IMR-90 (cell line): ENCODE measurements at regions of chr6 and their contacts with region 1.

Region 1: DNA sequence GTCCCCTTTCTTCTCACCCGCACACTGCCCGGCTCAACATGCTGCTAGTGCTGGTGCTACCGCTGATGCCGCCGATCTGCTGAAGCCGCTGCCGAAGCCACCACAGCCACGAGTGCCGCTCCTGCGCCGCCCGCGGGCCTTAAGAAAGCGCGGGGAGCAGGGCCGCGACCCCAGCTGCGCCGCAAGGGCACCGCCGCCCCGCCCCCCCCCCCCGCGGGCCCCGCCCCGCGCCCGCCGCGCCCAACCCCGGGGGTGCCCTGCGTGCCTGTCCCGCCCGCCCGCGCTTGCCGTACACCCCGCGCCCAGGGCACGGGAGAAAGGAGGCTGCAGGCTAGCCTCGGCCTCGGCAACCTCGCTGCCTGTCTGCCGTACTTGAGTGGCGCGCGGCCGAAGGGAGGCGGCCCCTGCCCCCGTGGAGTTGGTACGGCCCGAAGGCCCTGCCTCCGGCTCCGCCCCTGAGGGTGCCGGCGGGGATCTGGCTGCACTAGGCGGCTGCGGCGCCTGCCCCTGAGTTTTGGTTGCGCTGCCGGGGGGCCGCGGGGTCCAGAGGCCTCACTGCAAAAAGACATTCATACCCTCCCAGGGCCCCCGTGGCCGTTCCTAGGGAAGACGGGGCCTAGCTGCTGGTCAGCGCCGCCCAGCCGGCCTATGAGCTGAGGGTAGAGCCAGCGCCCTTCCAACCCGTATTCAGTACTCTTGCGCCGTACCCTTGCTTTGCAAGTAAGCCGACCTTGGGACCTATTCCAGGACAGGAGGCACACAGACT is at the start of gene SOD2:
- DNase-seq: peak; percentile 81
- ATAC-seq: peak; percentile 86
- H3K4me3 ChIP-seq: peak within 1 kb of the TSS; percentile 99
- H3K27ac ChIP-seq: peak within 1 kb of the TSS; percentile 99
- H3K4me1 ChIP-seq: peaks cover 12% of the 10 kb centered on the region
- H3K27me3 ChIP-seq: no peaks in the 10 kb centered on the region
- CTCF ChIP-seq: no peak
- POLR2A ChIP-seq: peak; percentile 84
- RAD21 ChIP-seq: no peak
- total RNA-seq, gene SOD2: 243 TPM in 2 replicates

Region 2: DNA sequence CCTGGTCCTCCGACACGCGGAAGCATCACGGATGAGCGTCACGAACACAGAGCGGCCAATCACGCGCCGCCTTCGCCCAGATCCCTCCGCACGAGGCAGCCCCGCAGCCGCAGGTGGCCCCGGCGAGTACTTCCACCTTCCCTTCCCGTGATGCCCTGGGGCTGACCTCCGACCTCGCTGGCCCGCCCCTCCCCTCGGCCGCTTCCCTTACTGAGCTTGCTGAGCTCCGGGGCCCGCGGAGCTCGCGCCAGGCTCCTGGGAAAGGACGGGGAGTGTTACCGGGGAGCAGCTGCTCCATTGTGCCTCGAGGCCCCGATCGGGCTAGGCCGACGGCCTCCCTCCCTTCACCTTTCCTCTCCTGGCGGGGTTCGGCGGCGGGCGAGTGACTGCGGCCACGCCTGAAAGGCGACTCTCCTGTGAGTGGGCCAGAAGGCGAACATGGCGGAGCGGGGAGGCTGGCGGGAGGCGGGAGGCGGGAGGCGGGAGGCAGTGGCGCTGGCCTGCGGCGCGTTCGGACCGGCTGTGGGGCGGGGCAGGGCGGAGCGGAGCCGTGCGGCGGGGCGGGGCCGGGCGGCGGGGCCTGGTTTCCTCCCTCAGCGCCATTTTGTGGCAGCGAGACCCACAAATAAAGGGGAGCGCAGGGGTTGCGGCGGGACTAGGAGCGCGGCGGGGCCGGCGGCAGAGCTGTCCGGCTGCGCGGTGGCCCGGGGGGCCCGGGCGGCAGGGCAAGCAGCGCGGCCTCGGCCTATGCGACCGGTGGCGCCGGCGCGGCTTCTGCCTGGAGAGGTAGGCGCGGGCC is 33.8 kb after region 1 on chr6 and contains the start of gene WTAP:
- CTCF ChIA-PET with region 1: no interaction called
- POLR2A ChIA-PET with region 1: no interaction called
- dilution Hi-C with region 1: no loop called
- in situ Hi-C with region 1: loop called (anchors 5 kb)
- intact Hi-C with region 1: loop called (anchors 1 kb)
- DNase-seq: peak; percentile 92
- ATAC-seq: peak; percentile 95
- H3K4me3 ChIP-seq: peak within 1 kb of the TSS; percentile 98
- H3K27ac ChIP-seq: peak within 1 kb of the TSS; percentile 99
- H3K4me1 ChIP-seq: peaks cover 3% of the 10 kb centered on the region; the same call in 1 of the 2 replicates
- H3K27me3 ChIP-seq: no peaks in the 10 kb centered on the region
- CTCF ChIP-seq: no peak
- POLR2A ChIP-seq: peak; percentile 94
- RAD21 ChIP-seq: no peak
- total RNA-seq, gene WTAP: 92.3 and 124 TPM in 2 replicates

Region 3: GRCh38 chr6:159761873-159762680 is 68.8 kb after region 1 on chr6 and contains the start of gene ACAT2:
- CTCF ChIA-PET with region 1: no interaction called
- POLR2A ChIA-PET with region 1: no interaction called
- dilution Hi-C with region 1: no loop called
- in situ Hi-C with region 1: loop called (anchors 10 kb)
- intact Hi-C with region 1: loop called (anchors 2 kb)
- DNase-seq: peak; percentile 92
- ATAC-seq: peak; percentile 96
- H3K4me3 ChIP-seq: peak within 1 kb of the TSS; percentile 79
- H3K27ac ChIP-seq: peak within 1 kb of the TSS; percentile 94
- H3K4me1 ChIP-seq: peaks cover 20% of the 10 kb centered on the region
- H3K27me3 ChIP-seq: no peaks in the 10 kb centered on the region
- CTCF ChIP-seq: no peak
- POLR2A ChIP-seq: peak; percentile 39; the same call in 1 of the 2 replicates
- RAD21 ChIP-seq: no peak
- total RNA-seq, gene ACAT2: 45.2 and 50.3 TPM in 2 replicates

Region 4: DNA sequence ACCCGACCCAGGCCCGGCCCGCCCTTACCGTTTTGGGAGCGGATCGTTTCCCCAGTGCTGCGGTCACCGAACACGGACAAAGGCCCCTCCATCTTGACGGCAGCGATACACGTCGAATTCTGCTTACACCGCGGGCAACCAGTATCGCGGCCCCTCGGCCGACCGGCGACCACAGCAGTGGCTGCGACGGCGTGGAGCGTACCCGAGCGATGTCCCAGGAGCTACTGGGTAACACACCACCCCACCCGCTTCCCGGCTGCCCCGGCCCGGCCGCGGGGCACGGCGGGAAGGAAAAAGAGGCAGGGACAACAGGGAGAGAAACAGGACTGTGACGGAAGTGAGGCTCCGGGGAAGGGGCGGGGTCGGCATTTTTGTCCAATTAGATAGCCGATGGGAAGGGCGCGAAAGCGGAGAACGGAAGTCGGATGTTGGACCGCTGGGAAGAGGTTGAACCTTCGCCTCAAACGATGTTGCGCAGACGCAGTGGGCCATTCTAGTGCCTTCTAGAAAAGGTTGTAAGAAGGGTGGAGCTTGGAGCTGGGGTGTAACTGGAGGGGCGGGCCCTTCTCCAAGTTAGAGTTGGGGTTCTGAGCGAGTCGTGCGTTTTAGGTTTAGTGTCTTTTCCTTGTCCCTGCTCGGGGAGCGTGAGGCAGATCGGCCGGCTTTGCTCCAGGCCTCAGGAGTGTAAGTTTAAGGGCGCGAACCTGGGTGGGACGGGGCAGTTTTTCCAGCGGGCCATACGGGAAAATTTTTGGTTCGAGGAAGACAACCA is 96.3 kb after region 1 on chr6 and contains the start of gene TCP1:
- CTCF ChIA-PET with region 1: interaction called, 5 read pairs
- POLR2A ChIA-PET with region 1: no interaction called
- dilution Hi-C with region 1: no loop called
- in situ Hi-C with region 1: no loop called
- intact Hi-C with region 1: loop called (anchors 1 kb)
- DNase-seq: peak; percentile 99
- ATAC-seq: peak; percentile 89
- H3K4me3 ChIP-seq: peak within 1 kb of the TSS; percentile 89
- H3K27ac ChIP-seq: peak within 1 kb of the TSS; percentile 91
- H3K4me1 ChIP-seq: peaks cover 4% of the 10 kb centered on the region
- H3K27me3 ChIP-seq: no peaks in the 10 kb centered on the region
- CTCF ChIP-seq: no peak
- POLR2A ChIP-seq: peak; percentile 95
- RAD21 ChIP-seq: no peak
- total RNA-seq, gene TCP1: 576 and 610 TPM in 2 replicates

Region 5: DNA sequence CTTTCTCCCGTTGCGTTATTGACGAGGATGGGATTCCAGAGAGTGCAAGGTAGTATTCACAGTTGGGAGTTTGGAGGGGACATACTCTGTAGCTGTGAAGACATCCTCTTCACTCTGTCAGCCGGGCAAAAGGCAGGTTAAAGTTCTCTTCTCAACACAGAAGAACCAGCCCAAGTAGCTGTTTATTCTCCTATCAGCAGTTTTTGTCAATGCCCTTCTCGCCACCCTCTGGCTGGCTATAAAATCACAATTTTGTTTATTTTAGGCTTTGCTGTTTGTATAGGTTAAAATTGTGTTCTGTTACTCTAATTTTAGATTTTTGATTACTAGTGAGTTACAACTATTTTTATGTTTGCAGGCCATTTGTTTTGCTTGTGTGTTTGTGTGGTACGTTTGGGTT is 159.6 kb after region 1 on chr6:
- CTCF ChIA-PET with region 1: no interaction called
- POLR2A ChIA-PET with region 1: no interaction called
- dilution Hi-C with region 1: no loop called
- in situ Hi-C with region 1: no loop called
- intact Hi-C with region 1: loop called (anchors 2 kb)
- DNase-seq: no peak
- ATAC-seq: 0 out of 2 replicates have a peak, but pooled peaks have one; percentile 24
- H3K4me3 ChIP-seq: no peak overlapping the region
- H3K27ac ChIP-seq: no peak overlapping the region
- H3K4me1 ChIP-seq: no peaks in the 10 kb centered on the region
- H3K27me3 ChIP-seq: peaks cover 5% of the 10 kb centered on the region
- CTCF ChIP-seq: peak; percentile 17; the same call in 1 of the 2 replicates
- POLR2A ChIP-seq: no peak
- RAD21 ChIP-seq: no peak

Region 6: DNA sequence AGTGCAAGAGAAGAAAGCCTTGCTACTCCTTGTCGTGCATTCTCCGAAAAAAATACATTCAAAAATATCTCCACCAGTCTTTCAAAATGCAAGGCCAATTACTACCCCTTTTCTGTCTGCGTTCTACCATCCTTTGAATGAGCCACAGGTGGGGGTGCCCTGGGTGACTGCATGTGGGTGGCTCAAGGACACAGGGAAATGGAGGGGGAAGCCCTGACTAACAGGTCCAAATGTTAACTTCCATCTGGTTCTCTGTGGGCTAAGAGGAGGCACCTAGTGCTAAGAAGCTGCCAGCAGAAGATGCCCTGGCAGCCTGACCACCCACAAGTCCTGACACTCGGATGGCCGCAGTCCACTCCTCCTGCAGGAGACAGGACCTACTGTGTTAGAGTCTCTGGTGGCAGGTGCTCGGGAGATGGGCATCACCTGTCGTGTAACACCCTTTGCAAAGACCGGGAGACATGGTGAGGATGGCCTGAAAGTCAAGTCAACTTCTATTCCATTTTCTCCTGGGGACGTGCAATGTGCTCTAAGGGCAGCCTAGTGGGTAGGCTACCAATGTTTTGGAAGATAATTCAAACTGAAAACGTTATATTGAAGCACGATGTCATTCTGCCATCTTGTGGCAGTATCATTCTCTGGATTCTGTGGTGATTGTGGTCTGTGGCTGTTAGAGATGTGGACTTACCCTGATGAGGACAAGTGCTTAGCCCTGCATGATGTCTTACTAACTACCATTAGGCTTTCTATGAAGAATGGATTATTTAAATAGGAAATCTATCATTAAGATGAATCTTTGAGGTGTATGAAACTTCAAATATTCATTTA is 248.2 kb after region 1 on chr6:
- CTCF ChIA-PET with region 1: interaction called, 3 read pairs
- POLR2A ChIA-PET with region 1: no interaction called
- dilution Hi-C with region 1: no loop called
- in situ Hi-C with region 1: no loop called
- intact Hi-C with region 1: loop called (anchors 1 kb)
- DNase-seq: peak; percentile 57
- ATAC-seq: peak; percentile 85
- H3K4me3 ChIP-seq: no peak overlapping the region
- H3K27ac ChIP-seq: no peak overlapping the region
- H3K4me1 ChIP-seq: peaks cover 2% of the 10 kb centered on the region; the same call in 1 of the 2 replicates
- H3K27me3 ChIP-seq: peaks cover 3% of the 10 kb centered on the region; the same call in 1 of the 2 replicates
- CTCF ChIP-seq: peak; percentile 68
- POLR2A ChIP-seq: no peak
- RAD21 ChIP-seq: peak; percentile 85

Region 7: DNA sequence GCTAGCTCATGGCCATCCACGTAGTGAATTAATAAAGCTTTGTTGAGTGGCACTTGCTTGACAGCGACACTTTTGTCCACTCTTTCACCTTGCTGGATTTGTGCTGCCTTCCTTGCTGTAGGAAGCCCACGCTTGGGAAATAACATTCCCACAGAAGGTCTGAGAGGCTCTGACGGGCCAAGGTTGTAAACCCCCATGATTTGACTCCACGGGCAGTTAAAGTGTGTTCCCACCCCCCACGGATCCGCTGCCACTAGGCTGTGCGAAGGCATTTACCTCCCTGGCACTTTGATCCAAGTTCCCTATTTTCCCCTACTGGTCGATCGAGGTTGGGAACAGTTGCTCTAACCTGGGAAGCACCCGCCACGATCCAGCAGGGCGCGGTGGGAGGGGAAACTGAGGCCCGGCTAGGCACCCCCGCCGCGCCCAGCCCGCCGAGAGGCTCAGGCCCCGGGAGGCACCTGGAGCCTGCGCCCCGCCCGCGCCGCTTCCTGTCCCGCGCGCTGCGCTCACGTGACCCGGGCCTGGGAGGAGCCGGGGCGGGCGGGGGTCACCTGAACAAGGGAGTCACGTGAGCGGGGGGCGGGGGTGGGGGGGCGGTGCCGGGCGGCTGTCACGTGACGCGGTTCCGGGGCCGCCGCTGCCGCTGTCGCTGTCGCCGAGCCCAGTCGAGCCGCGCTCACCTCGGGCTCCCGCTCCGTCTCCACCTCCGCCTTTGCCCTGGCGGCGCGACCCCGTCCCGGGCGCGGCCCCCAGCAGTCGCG is 275.3 kb after region 1 on chr6 and contains the start of gene IGF2R:
- CTCF ChIA-PET with region 1: no interaction called
- POLR2A ChIA-PET with region 1: no interaction called
- dilution Hi-C with region 1: no loop called
- in situ Hi-C with region 1: loop called (anchors 25 kb)
- intact Hi-C with region 1: no loop called
- DNase-seq: peak; percentile 80
- ATAC-seq: peak; percentile 83
- H3K4me3 ChIP-seq: peak within 1 kb of the TSS; percentile 91
- H3K27ac ChIP-seq: peak within 1 kb of the TSS; percentile 93
- H3K4me1 ChIP-seq: peaks cover 5% of the 10 kb centered on the region
- H3K27me3 ChIP-seq: peaks cover 10% of the 10 kb centered on the region
- CTCF ChIP-seq: 0 out of 2 replicates have a peak, but pooled peaks have one; percentile 13
- POLR2A ChIP-seq: peak; percentile 75
- RAD21 ChIP-seq: no peak
- total RNA-seq, gene IGF2R: 33.2 and 38.6 TPM in 2 replicates

Region 8: GRCh38 chr6:160421854-160422253 is 728.5 kb after region 1 on chr6:
- CTCF ChIA-PET with region 1: no interaction called
- POLR2A ChIA-PET with region 1: no interaction called
- dilution Hi-C with region 1: no loop called
- in situ Hi-C with region 1: no loop called
- intact Hi-C with region 1: no loop called
- DNase-seq: no peak
- ATAC-seq: no peak
- H3K4me3 ChIP-seq: no peak overlapping the region
- H3K27ac ChIP-seq: no peak overlapping the region
- H3K4me1 ChIP-seq: no peaks in the 10 kb centered on the region
- H3K27me3 ChIP-seq: no peaks in the 10 kb centered on the region
- CTCF ChIP-seq: no peak
- POLR2A ChIP-seq: no peak
- RAD21 ChIP-seq: no peak